ENCODE measurements at regions of chr19 and their contacts with region 1.

Region 1: DNA sequence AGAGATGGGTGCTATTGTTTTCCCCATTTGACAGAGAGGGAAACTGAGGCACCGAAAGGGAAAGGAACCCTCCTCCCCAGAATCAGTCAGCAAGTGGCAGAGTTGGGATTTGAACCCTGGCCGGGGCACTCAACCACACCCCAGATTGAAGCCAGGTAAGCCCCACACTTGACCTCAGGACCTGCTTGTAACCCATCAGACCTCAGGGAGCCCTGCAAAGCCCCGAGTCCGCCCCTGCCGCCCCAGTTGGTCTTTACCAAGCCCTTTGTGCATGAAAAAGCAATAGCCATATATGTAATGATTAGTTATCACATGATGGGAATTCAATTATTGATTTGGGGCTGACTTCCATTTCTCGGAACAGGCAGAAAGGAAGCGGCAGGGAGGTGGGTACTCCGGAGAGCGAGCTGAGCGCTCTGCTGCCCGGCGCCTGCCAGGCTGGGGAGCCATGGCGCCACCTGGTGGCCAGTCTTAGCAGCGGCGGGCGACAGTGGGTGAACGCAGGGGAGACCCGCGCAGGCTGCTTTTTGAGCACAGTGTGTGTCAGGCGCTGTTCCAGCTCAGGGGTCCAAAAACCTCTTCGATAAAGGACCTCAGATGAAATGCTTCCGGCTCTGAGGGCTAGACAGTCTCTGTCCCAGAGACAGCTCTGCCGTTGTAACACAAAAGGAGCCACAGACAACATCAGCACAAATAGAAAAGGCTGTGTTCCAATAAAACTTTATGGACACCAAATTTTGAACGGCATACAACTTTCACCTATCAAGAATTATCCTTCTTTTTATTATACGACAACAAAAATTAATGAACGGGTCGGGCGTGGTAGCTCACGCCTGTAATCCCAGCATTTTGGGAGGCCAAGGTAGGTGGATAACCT is 82.9 kb upstream of the CACNA1A start:
- DNase-seq: peak; percentile 3 to 13
- ATAC-seq: no peak
- H3K4me3 ChIP-seq: no peak overlapping the region
- H3K27ac ChIP-seq: no peak overlapping the region
- H3K4me1 ChIP-seq: no peaks in the 10 kb centered on the region
- H3K27me3 ChIP-seq: peaks cover 0 to 7% (median 3%) of the 10 kb centered on the region in 3 donors
- CTCF ChIP-seq: peak; percentile 42 to 87 (median 77)
- POLR2A ChIP-seq: no peak

Region 2: GRCh38 chr19:13277104-13277809 is 311.9 kb before region 1 on chr19:
- in situ Hi-C with region 1: loop called (anchors 5 to 25 kb)
- intact Hi-C with region 1: loop called (anchors 1 kb)
- DNase-seq: peak in 1 of 2 donors; percentile 15
- ATAC-seq: peak; percentile 89 to 91
- H3K4me3 ChIP-seq: no peak overlapping the region
- H3K27ac ChIP-seq: no peak overlapping the region
- H3K4me1 ChIP-seq: no peaks in the 10 kb centered on the region
- H3K27me3 ChIP-seq: no peaks in the 10 kb centered on the region
- CTCF ChIP-seq: peak; percentile 56 to 75 (median 65)
- POLR2A ChIP-seq: no peak

Region 3: GRCh38 chr19:13548131-13548530 is 41.1 kb before region 1 on chr19:
- in situ Hi-C with region 1: no loop called
- intact Hi-C with region 1: no loop called
- DNase-seq: no peak
- ATAC-seq: no peak
- H3K4me3 ChIP-seq: no peak overlapping the region
- H3K27ac ChIP-seq: no peak overlapping the region
- H3K4me1 ChIP-seq: no peaks in the 10 kb centered on the region
- H3K27me3 ChIP-seq: peaks cover 0 to 2% (median 0%) of the 10 kb centered on the region in 3 donors
- CTCF ChIP-seq: no peak
- POLR2A ChIP-seq: no peak

Measured in gastrocnemius medialis (tissue), 4 donors.